PC-3 (cell line): ENCODE measurements at regions of chr3 and their contacts with region 1.

Region 1: DNA sequence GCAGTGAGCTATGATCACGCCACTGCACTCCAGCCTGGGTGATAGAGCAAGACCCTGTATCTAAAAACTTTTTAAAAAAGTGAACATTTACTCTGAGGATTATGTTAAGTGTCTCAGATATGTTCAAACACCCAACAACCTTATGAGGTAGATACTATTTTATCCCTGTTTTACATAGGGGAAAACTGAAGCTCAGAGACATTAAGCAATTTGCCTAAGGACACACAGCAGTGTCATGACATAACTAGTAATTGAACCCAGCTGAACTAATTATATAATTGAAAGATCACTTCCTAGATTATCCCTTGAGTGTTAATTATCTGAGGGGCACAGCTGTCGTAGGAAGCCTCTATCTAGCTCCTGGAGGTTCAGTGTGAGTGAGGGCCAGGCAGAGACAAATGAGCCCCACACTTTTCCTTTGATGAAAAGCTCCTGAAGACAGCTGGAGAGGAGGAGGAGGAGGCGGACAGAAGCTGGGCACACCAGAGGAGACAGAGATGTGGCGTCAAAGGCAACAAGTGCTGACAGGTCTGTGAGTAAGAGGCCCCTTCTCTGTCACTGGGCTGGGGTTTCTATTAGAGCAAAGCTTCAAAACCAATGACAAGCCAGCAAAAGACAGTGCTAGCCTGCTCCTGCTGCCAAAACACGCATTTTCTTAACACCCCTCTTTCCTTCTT is 20.5 kb downstream of the TRH start:
- DNase-seq: no peak
- ATAC-seq: no peak
- H3K4me3 ChIP-seq: no peak overlapping the region
- H3K27ac ChIP-seq: no peak overlapping the region
- H3K4me1 ChIP-seq: no peaks in the 10 kb centered on the region
- H3K27me3 ChIP-seq: peaks cover 26% of the 10 kb centered on the region
- CTCF ChIP-seq: no peak

Region 2: GRCh38 chr3:129942296-129942695 is 52.7 kb before region 1 on chr3:
- CTCF ChIA-PET with region 1: no interaction called
- POLR2A ChIA-PET with region 1: no interaction called
- intact Hi-C with region 1: loop called (anchors 5 kb)
- DNase-seq: peak; percentile 63
- ATAC-seq: peak; percentile 83
- H3K4me3 ChIP-seq: no peak overlapping the region
- H3K27ac ChIP-seq: no peak overlapping the region
- H3K4me1 ChIP-seq: no peaks in the 10 kb centered on the region
- H3K27me3 ChIP-seq: peaks cover 4% of the 10 kb centered on the region; the same call in 1 of the 2 replicates
- CTCF ChIP-seq: peak; percentile 67